Psoas muscle (tissue), 8 donors: ENCODE measurements at regions of chr15 and their contacts with region 1.

Region 1: GRCh38 chr15:52626671-52627369 is 52.4 kb downstream of the ATOSA start:
- DNase-seq: no peak
- ATAC-seq: peak; percentile 65 to 80 (median 69)
- H3K4me3 ChIP-seq: no peak overlapping the region
- H3K27ac ChIP-seq: peak overlapping the region; percentile 60
- H3K4me1 ChIP-seq: peaks cover 37% of the 10 kb centered on the region
- H3K27me3 ChIP-seq: no peaks in the 10 kb centered on the region
- CTCF ChIP-seq: no peak

Region 2: GRCh38 chr15:52730173-52730572 is 103.4 kb after region 1 on chr15:
- intact Hi-C with region 1: loop called (anchors 5 to 10 kb)
- DNase-seq: no peak
- ATAC-seq: peak in 3 of 4 donors; percentile 45 to 69 (median 55)
- H3K4me3 ChIP-seq: no peak overlapping the region
- H3K27ac ChIP-seq: peak overlapping the region; percentile 78
- H3K4me1 ChIP-seq: peaks cover 42% of the 10 kb centered on the region
- H3K27me3 ChIP-seq: no peaks in the 10 kb centered on the region
- CTCF ChIP-seq: no peak